Activated CD8-positive, alpha-beta T cell treated with anti-CD3 and anti-CD28 coated beads, Interleukin-2, amount 10 ng/mL, durations not matched to agents 7 days and 5 days (primary cell): ENCODE measurements at regions of chr11 and their contacts with region 1.

Region 1: DNA sequence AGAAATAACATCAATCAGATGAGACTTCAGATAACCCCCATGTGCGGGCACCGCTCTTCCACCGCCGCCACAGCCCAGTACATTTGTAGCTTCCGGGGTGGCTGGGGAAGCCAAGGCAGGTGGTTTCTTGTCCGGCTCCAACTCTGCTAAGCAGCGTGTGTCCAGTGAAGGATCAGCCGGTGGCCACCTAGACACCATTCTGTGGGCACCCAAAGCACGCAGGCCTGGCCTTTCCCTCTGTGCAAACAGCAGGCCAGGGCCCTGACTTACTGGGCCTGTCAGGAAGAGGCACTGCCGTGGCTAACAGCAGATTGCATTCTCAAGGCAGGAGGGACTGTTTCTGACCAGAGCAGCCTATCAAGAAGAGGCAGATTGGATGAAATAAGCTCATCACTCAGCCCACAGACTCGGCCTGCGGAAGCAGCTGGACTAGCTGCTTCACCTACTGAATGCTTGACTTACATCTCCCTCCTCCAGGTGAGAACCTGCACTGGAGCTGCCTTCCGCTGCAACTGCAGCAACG is 74.8 kb downstream of the ETS1 start:
- DNase-seq: peak; percentile 68
- ATAC-seq: peak; percentile 45
- H3K4me3 Mint-ChIP-seq: peak overlapping the region; percentile 96
- H3K27ac Mint-ChIP-seq: peak overlapping the region; percentile 82
- H3K4me1 Mint-ChIP-seq: peaks cover 84% of the 10 kb centered on the region
- H3K27me3 Mint-ChIP-seq: no peaks in the 10 kb centered on the region

Region 2: GRCh38 chr11:128302425-128303186 is 209.9 kb before region 1 on chr11:
- CTCF ChIA-PET with region 1: interaction called, 7 read pairs
- POLR2A ChIA-PET with region 1: interaction called, 184 read pairs
- DNase-seq: peak; percentile 90
- ATAC-seq: peak; percentile 90
- H3K4me3 Mint-ChIP-seq: peak overlapping the region; percentile 89
- H3K27ac Mint-ChIP-seq: peak overlapping the region; percentile 96
- H3K4me1 Mint-ChIP-seq: peaks cover 79% of the 10 kb centered on the region
- H3K27me3 Mint-ChIP-seq: no peaks in the 10 kb centered on the region

Region 3: GRCh38 chr11:128488471-128488870 is 24.1 kb before region 1 on chr11:
- CTCF ChIA-PET with region 1: interaction called, 10 read pairs
- POLR2A ChIA-PET with region 1: interaction called, 87 read pairs
- DNase-seq: no peak
- ATAC-seq: peak; percentile 18
- H3K4me3 Mint-ChIP-seq: peak overlapping the region; percentile 26
- H3K27ac Mint-ChIP-seq: peak overlapping the region; percentile 87
- H3K4me1 Mint-ChIP-seq: peaks cover 95% of the 10 kb centered on the region
- H3K27me3 Mint-ChIP-seq: no peaks in the 10 kb centered on the region

Region 4: DNA sequence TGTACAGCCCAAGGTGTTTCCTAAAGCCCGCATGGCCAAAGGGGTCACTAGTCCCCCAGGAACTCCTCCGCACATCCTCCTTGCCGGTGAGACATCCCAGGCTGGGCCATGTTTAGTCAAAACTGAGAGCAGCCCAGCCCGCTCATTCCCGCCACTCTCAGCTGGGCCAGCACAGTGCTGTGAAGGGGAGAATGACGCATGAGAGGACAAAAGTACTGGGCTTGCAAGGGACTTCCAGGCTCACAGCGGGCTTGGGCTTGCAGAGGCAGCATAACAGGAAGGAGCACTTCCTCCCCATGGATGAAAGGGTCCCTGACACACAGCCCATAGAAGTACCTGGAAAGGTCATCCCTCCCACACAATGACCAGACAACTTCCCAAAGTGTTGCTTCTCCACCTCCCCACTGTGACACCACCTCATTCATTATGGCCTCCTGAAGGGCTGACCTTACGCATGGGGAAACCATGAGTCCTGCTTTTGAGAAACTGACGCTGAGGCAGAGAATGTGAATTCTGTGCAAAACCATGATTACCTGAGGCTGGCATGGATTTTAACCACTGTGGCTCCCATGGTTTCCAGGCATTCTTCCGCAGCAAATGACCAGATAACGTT is 55.7 kb after region 1 on chr11:
- CTCF ChIA-PET with region 1: no interaction called
- POLR2A ChIA-PET with region 1: no interaction called
- DNase-seq: no peak
- ATAC-seq: no peak
- H3K4me3 Mint-ChIP-seq: no peak overlapping the region
- H3K27ac Mint-ChIP-seq: no peak overlapping the region
- H3K4me1 Mint-ChIP-seq: peaks cover 8% of the 10 kb centered on the region
- H3K27me3 Mint-ChIP-seq: peaks cover 2% of the 10 kb centered on the region

Region 5: GRCh38 chr11:128890543-128891368 is 378.2 kb after region 1 on chr11 and contains the start of gene KCNJ5:
- CTCF ChIA-PET with region 1: no interaction called
- POLR2A ChIA-PET with region 1: no interaction called
- DNase-seq: no peak
- ATAC-seq: peak; percentile 35
- H3K4me3 Mint-ChIP-seq: peak within 1 kb of the TSS; percentile 58
- H3K27ac Mint-ChIP-seq: no peak within 1 kb of the TSS
- H3K4me1 Mint-ChIP-seq: peaks cover 30% of the 10 kb centered on the region
- H3K27me3 Mint-ChIP-seq: peaks cover 64% of the 10 kb centered on the region
- total RNA-seq, gene KCNJ5: not detected